Esophagus squamous epithelium (tissue), 5 donors: ENCODE measurements at regions of chr7 and their contacts with region 1.

Region 1: DNA sequence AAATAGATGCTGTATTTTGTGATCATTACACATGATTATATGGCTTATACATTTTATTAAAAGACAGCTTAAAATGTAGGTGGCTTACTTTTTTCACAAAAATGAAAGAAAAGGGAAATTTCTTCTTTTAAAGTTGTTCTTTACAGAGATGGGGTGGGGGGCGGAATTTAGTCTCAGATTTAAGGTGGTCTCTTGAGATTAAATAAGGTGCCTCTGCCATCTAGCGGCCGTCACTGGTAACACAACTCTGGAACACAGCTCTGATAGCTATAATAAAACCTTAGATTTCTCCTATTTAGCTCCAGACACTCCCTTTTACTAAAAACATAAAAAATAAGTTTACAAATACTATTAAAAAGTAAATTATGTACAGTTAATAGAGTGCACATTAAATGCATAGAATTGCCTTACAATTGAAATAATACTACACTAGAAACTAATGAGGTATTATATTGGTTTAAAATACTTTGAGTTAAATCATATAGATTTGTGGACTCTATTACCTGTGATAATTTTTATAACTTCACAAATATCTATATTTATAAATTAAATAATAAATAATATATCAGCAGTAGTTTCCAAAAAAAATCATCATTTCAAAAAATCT is 210.9 kb downstream of the DGKB start:
- DNase-seq: no peak
- H3K4me3 ChIP-seq: no peak overlapping the region
- H3K27ac ChIP-seq: no peak overlapping the region
- H3K4me1 ChIP-seq: no peaks in the 10 kb centered on the region
- H3K27me3 ChIP-seq: no peaks in the 10 kb centered on the region
- CTCF ChIP-seq: peak; percentile 37 to 78 (median 70)
- POLR2A ChIP-seq: no peak

Region 2: GRCh38 chr7:13279854-13280435 is 1411.8 kb before region 1 on chr7:
- intact Hi-C with region 1: loop called (anchors 5 kb)
- DNase-seq: no peak
- H3K4me3 ChIP-seq: no peak overlapping the region
- H3K27ac ChIP-seq: no peak overlapping the region
- H3K4me1 ChIP-seq: no peaks in the 10 kb centered on the region
- H3K27me3 ChIP-seq: no peaks in the 10 kb centered on the region
- CTCF ChIP-seq: peak in 4 of 6 experiments; percentile 23 to 46 (median 43)
- POLR2A ChIP-seq: no peak

Region 3: GRCh38 chr7:15015545-15016326 is 324.0 kb after region 1 on chr7:
- intact Hi-C with region 1: loop called (anchors 10 kb)
- DNase-seq: no peak
- H3K4me3 ChIP-seq: peak overlapping the region in 1 of 4 donors; percentile 31
- H3K27ac ChIP-seq: no peak overlapping the region
- H3K4me1 ChIP-seq: peaks cover 0 to 8% (median 0%) of the 10 kb centered on the region in 3 donors
- H3K27me3 ChIP-seq: no peaks in the 10 kb centered on the region
- CTCF ChIP-seq: peak in 5 of 6 experiments; percentile 38 to 62 (median 50)
- POLR2A ChIP-seq: no peak